ENCODE measurements at regions of chr19 and their contacts with region 1.

Region 1: DNA sequence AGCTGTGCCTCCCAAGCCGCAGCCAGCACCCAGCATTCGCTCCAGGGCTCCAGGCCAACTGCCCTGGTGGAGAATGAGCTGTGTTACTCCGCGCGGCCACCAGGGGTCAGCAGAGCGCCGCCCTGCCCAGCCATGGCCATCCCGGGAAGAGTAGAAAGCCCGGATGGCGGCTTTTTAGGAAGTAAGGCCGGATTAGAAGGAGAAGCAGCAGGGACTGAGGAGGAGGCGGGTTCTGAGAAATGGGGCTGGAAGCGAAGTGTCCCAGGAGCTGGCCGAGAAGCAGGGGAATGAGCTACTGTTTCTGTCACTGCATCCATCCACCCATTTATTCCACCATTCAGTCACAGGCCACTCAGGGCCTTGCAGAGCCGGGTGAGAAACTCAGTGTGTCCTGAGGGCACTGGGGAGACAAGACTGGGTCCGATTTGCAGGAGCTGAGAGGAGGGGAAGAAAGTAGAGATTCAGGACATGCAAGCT is 6.6 kb upstream of the NPAS1 start:
- DNase-seq: peak; percentile 69
- ATAC-seq: peak; percentile 76
- H3K4me3 Mint-ChIP-seq: no peak overlapping the region
- H3K27ac Mint-ChIP-seq: no peak overlapping the region
- H3K4me1 Mint-ChIP-seq: peaks cover 8% of the 10 kb centered on the region
- H3K27me3 Mint-ChIP-seq: peaks cover 16% of the 10 kb centered on the region

Region 2: GRCh38 chr19:46775642-46776258 is 237.3 kb before region 1 on chr19:
- CTCF ChIA-PET with region 1: no interaction called
- DNase-seq: no peak
- ATAC-seq: no peak
- H3K4me3 Mint-ChIP-seq: no peak overlapping the region
- H3K27ac Mint-ChIP-seq: no peak overlapping the region
- H3K4me1 Mint-ChIP-seq: peaks cover 32% of the 10 kb centered on the region
- H3K27me3 Mint-ChIP-seq: no peaks in the 10 kb centered on the region

Region 3: DNA sequence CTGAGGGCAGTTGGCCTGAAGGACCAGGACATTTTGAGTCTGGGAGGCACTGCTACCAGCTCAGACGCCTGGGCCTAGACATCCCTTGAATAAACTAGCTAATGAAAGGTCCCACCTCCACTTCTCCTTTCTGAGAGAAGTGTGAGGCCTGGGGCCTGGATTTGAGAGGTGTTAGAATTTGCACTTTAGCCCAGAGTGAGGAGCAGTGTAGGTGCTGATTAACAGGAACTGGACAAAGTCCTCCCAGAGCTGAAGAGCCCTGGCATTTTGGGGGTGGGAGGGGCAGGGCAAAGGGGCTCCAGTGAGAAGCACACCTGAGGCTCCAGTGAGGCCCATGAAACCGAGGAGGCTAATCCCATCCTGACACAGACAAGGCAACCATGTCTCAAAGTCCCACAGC is 209.5 kb before region 1 on chr19:
- CTCF ChIA-PET with region 1: no interaction called
- DNase-seq: no peak
- ATAC-seq: no peak
- H3K4me3 Mint-ChIP-seq: no peak overlapping the region
- H3K27ac Mint-ChIP-seq: no peak overlapping the region
- H3K4me1 Mint-ChIP-seq: no peaks in the 10 kb centered on the region
- H3K27me3 Mint-ChIP-seq: no peaks in the 10 kb centered on the region

Region 4: DNA sequence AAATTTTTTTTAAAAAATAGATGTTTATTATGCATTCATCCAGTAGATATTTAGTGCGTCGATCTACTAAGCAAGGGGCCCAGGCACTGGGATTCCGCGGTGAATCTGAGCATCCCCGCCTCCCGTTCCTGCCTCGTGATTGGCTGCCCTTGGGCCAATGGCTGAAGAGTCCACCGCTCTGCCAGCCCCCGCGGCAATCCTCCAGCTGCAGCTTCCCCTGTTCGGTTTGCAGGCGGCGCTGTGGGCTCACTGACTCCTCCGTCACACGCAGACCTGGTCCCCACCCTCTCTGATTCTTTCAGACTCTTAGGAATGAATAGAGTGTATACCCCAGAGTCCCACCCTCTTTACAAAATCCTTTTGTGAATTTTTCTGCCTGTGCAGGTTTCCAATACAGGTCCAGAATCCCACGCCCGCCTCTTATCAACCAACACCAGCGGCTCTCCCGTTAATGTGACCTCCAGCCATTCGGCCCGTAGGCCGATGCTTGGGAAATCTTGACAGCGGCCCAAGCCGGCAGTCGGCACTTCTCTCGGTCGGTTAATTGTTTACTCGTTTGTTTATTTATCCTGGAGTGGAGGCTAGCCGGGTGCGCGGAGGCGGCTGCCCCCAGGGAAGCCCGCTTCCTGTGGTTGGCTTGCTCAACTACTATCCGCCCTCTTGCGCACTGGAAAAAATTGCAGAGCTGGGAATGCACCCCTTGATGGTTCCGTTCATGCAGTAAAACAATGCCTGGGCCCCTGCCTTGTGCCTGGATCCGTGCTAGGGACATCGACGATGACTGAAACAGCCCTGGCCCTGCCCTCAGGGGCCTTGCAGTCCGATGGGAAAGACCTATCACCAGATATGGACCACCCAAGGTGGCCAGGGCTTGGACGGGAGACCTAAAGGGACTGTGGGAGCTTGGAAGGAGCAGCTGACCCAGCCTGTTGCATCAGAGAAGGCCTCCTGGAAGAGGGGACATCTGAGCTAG is 156.7 kb before region 1 on chr19:
- CTCF ChIA-PET with region 1: interaction called, 28 read pairs
- DNase-seq: peak; percentile 95
- ATAC-seq: peak; percentile 74
- H3K4me3 Mint-ChIP-seq: peak overlapping the region; percentile 66
- H3K27ac Mint-ChIP-seq: peak overlapping the region; percentile 75
- H3K4me1 Mint-ChIP-seq: peaks cover 22% of the 10 kb centered on the region
- H3K27me3 Mint-ChIP-seq: no peaks in the 10 kb centered on the region

Region 5: GRCh38 chr19:46990991-46991676 is 21.9 kb before region 1 on chr19:
- CTCF ChIA-PET with region 1: interaction called, 21 read pairs
- DNase-seq: peak; percentile 77
- ATAC-seq: peak; percentile 76
- H3K4me3 Mint-ChIP-seq: no peak overlapping the region
- H3K27ac Mint-ChIP-seq: peak overlapping the region; percentile 64
- H3K4me1 Mint-ChIP-seq: peaks cover 16% of the 10 kb centered on the region
- H3K27me3 Mint-ChIP-seq: no peaks in the 10 kb centered on the region

Region 6: GRCh38 chr19:47035127-47036096 is 22.3 kb after region 1 on chr19:
- CTCF ChIA-PET with region 1: interaction called, 69 read pairs
- DNase-seq: peak; percentile 96
- ATAC-seq: peak; percentile 93
- H3K4me3 Mint-ChIP-seq: peak overlapping the region; percentile 88
- H3K27ac Mint-ChIP-seq: peak overlapping the region; percentile 79
- H3K4me1 Mint-ChIP-seq: peaks cover 17% of the 10 kb centered on the region
- H3K27me3 Mint-ChIP-seq: peaks cover 27% of the 10 kb centered on the region

Region 7: DNA sequence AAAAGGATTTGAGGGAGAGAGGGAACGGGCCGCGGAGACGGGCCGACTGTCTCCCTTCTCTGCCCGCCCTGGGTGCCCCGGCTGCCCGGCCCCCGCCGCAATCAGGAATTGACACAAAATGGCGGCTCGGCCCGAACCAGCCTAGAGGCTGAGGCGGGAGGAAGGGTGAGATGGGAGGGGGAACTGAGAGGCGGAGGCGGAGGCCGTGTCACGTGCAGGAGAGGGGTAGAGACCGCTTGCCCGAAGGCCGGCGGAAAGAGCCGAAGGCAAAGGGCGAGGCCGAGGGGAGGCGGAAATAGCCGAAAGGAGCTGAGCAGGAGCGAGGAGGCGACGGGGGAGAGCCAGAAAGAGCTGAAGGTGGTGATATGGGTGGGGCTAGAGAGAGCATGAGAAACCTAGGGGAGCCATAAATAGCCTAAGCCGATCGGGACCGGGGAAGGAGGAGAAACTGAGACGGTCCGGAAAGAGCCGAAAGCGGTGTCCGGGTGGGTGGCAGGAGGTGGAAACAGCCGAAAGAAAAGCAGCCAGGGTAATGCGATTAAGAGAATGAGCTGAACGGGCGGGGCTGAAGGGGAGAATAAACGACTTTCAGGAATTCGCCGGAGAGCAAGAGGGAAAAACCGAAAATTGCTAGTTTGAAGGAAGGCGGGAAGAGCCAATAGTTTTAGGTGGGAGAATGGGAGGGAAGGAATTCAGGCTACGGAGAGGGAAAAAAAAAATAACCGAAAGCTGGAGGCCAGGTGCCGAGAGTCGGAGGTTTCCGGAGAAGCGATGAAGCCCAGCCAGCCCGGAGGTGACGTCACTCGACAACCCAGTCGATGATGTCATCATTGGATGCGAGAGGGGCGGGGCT is 100.1 kb after region 1 on chr19 and contains the start of gene ZC3H4:
- CTCF ChIA-PET with region 1: interaction called, 16 read pairs
- DNase-seq: peak; percentile 100
- ATAC-seq: peak; percentile 86
- H3K4me3 Mint-ChIP-seq: peak within 1 kb of the TSS; percentile 95
- H3K27ac Mint-ChIP-seq: peak within 1 kb of the TSS; percentile 100
- H3K4me1 Mint-ChIP-seq: peaks cover 24% of the 10 kb centered on the region
- H3K27me3 Mint-ChIP-seq: no peaks in the 10 kb centered on the region
- total RNA-seq, gene ZC3H4: 98.9 to 114 TPM

Region 8: GRCh38 chr19:47157431-47158321 is 144.6 kb after region 1 on chr19:
- CTCF ChIA-PET with region 1: interaction called, 15 read pairs
- DNase-seq: peak; percentile 51
- ATAC-seq: peak; percentile 46
- H3K4me3 Mint-ChIP-seq: peak overlapping the region; percentile 10
- H3K27ac Mint-ChIP-seq: peak overlapping the region; percentile 73
- H3K4me1 Mint-ChIP-seq: peaks cover 44% of the 10 kb centered on the region
- H3K27me3 Mint-ChIP-seq: no peaks in the 10 kb centered on the region